Activated CD4-positive, alpha-beta T cell treated with anti-CD3 and anti-CD28 coated beads, Interleukin-2, amount 10 ng/mL, durations not matched to agents 7 days and 5 days (primary cell): ENCODE measurements at regions of chr16 and their contacts with region 1.

Region 1: GRCh38 chr16:57145046-57146021 is 40.5 kb downstream of the PSME3IP1 start:
- DNase-seq: no peak
- H3K4me3 Mint-ChIP-seq: no peak overlapping the region
- H3K27ac Mint-ChIP-seq: no peak overlapping the region
- H3K4me1 Mint-ChIP-seq: peaks cover 36% of the 10 kb centered on the region
- H3K27me3 Mint-ChIP-seq: no peaks in the 10 kb centered on the region

Region 2: DNA sequence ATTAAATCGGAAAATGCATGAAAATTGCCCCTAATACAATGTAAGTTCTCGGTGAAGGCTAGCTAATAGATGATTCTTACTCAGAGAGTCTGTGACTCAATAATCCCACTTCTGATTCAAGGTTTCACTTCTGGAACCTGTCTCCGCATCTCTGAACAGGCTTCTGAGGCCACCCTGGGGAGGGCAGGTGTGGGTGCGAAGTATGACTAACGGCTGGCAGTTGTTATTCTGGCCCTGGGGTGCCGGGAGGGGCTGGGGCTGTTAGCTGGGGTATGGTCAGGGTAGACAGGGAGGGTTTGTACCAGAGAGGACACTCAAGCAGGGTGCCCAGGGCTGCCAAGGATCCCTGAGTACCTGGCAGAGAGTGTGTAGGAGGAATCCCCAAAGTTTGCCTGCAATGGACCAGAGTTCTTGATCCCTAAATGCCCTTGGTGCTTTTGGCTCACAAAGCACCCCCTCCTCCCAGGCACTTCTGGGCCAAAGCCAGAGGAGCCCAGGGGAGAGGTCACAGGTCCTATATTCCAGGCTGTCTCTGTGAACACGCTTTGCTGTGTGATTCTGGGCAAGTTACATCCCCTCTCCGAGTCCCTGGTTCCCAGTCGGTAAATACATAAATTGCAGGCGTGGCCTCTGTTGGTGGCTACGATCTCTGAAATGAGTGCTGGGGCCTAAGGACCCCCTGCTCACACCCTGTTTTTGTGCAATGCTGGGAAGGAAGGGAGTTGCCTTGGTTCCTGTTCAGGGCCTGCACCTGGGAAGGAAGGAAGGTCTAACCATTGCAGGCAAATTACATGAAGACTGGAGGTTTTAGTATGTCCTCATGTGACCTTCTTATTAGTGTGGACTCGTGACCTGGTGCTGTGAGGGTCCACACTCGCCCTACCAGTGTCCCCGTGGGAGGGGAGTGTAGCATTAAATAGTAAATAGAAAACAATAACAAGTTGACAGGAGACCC is 102.9 kb before region 1 on chr16:
- CTCF ChIA-PET with region 1: no interaction called
- POLR2A ChIA-PET with region 1: no interaction called
- DNase-seq: peak; percentile 68
- H3K4me3 Mint-ChIP-seq: peak overlapping the region; percentile 60
- H3K27ac Mint-ChIP-seq: peak overlapping the region; percentile 97
- H3K4me1 Mint-ChIP-seq: peaks cover 69% of the 10 kb centered on the region
- H3K27me3 Mint-ChIP-seq: no peaks in the 10 kb centered on the region

Region 3: GRCh38 chr16:57071831-57072582 is 73.3 kb before region 1 on chr16:
- CTCF ChIA-PET with region 1: no interaction called
- POLR2A ChIA-PET with region 1: no interaction called
- DNase-seq: no peak
- H3K4me3 Mint-ChIP-seq: no peak overlapping the region
- H3K27ac Mint-ChIP-seq: peak overlapping the region; percentile 4
- H3K4me1 Mint-ChIP-seq: peaks cover 14% of the 10 kb centered on the region
- H3K27me3 Mint-ChIP-seq: no peaks in the 10 kb centered on the region

Region 4: GRCh38 chr16:57134982-57135381 is 10.4 kb before region 1 on chr16:
- CTCF ChIA-PET with region 1: interaction called, 13 read pairs
- POLR2A ChIA-PET with region 1: no interaction called
- DNase-seq: peak; percentile 53
- H3K4me3 Mint-ChIP-seq: peak overlapping the region; percentile 73
- H3K27ac Mint-ChIP-seq: peak overlapping the region; percentile 94
- H3K4me1 Mint-ChIP-seq: peaks cover 71% of the 10 kb centered on the region
- H3K27me3 Mint-ChIP-seq: no peaks in the 10 kb centered on the region